IMR-90 (cell line): ENCODE measurements at regions of chr15 and their contacts with region 1.

Region 1: DNA sequence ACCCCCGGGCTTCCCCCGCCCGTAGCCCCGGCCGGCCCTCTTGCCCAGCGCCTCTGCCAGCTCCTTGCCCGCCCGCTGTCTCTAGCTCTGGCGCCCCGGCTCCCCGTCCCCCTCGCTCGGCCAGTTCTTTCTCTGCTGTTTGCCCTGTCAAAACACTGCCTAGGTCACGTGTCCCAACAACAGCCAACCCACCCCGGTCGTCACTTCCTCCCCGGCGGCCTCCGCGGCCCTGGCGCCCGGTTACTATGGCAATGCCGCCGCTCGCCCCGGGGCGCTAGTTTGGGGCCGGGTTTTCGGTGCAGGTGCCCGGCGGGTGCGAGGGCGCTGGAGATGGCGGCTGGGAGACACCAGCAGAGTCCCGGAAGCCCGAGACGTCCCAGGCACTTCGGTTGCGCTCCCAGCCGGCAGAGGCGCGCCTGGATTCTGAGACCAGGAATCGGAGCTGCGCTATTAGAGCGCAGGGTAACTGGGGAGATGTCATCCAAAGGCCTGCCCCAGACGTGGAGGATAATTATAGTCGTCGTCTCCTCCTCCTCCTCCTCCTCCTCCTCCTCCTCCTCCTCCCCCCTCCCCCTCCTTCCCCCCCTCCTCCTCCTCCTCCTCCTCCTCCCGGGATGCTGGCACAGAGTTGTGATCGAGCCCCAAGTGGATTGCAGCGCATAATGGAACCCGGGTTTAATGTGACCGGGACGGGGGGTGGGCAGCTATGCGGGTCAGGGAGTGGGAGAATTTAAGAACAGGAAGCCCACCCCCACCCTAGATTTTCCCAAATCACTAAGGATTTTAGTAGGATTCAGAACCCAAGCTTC is at the start of gene ATOSA:
- DNase-seq: peak; percentile 84
- ATAC-seq: peak; percentile 84
- H3K4me3 ChIP-seq: peak within 1 kb of the TSS; percentile 94
- H3K27ac ChIP-seq: peak within 1 kb of the TSS; percentile 69
- H3K4me1 ChIP-seq: no peaks in the 10 kb centered on the region
- H3K27me3 ChIP-seq: peaks cover 2% of the 10 kb centered on the region
- CTCF ChIP-seq: 0 out of 2 replicates have a peak, but pooled peaks have one; percentile 7
- POLR2A ChIP-seq: no peak
- RAD21 ChIP-seq: no peak
- total RNA-seq, gene ATOSA: 17.2 and 23.9 TPM in 2 replicates

Region 2: DNA sequence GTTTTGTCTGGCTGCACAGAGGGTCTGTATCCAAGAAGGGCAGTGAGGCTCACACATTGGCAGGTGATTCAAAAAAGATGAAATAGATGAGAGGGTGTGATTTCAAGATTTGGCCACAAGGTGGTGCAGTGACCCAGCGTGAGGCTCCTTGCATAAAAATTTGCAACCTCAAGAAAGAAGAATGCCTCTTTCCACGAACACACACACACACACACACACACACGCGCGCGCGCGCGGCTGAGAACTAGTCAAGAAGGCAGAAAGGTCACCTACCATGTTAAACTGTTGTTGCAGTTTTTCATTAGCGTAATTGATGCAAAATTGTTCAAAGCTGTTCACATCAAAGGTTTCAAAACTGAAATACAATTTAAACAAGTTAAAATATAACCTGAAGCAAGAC is 423.1 kb before region 1 on chr15:
- CTCF ChIA-PET with region 1: no interaction called
- POLR2A ChIA-PET with region 1: no interaction called
- dilution Hi-C with region 1: no loop called
- in situ Hi-C with region 1: no loop called
- intact Hi-C with region 1: loop called (anchors 10 kb)
- DNase-seq: peak; percentile 80
- ATAC-seq: peak; percentile 64
- H3K4me3 ChIP-seq: no peak overlapping the region; the same call in 1 of the 2 replicates
- H3K27ac ChIP-seq: no peak overlapping the region
- H3K4me1 ChIP-seq: peaks cover 10% of the 10 kb centered on the region
- H3K27me3 ChIP-seq: no peaks in the 10 kb centered on the region
- CTCF ChIP-seq: peak; percentile 82
- POLR2A ChIP-seq: no peak
- RAD21 ChIP-seq: peak; percentile 91

Region 3: GRCh38 chr15:52528991-52529926 is 150.2 kb before region 1 on chr15:
- CTCF ChIA-PET with region 1: no interaction called
- POLR2A ChIA-PET with region 1: no interaction called
- dilution Hi-C with region 1: no loop called
- in situ Hi-C with region 1: no loop called
- intact Hi-C with region 1: loop called (anchors 5 kb)
- DNase-seq: peak; percentile 71
- ATAC-seq: peak; percentile 87
- H3K4me3 ChIP-seq: peak overlapping the region; percentile 75
- H3K27ac ChIP-seq: peak overlapping the region; percentile 25
- H3K4me1 ChIP-seq: 0 out of 2 replicates have a peak, but pooled peaks cover 3% of the 10 kb centered on the region
- H3K27me3 ChIP-seq: peaks cover 8% of the 10 kb centered on the region
- CTCF ChIP-seq: 0 out of 2 replicates have a peak, but pooled peaks have one; percentile 15
- POLR2A ChIP-seq: no peak
- RAD21 ChIP-seq: peak; percentile 40

Region 4: DNA sequence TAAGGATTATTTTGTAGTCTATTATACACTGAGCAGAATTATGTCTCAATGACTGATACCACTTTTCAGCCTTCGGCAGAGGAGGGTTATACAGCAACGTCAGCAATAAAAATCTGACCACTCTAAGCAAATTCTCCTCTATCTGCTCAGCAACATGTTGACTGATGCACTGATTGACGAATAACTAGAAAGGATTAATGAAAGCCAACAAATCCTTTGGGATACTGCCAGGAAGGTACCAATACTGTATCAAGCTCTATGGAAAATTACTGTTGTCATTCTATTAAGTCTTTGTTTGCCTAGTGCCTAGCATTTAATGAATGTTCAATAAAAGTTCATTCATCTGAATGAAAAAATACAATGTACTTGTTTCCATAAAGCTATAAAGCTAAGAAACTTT is 115.8 kb before region 1 on chr15:
- CTCF ChIA-PET with region 1: no interaction called
- POLR2A ChIA-PET with region 1: no interaction called
- dilution Hi-C with region 1: no loop called
- in situ Hi-C with region 1: no loop called
- intact Hi-C with region 1: loop called (anchors 2 kb)
- DNase-seq: no peak
- ATAC-seq: no peak
- H3K4me3 ChIP-seq: no peak overlapping the region
- H3K27ac ChIP-seq: no peak overlapping the region
- H3K4me1 ChIP-seq: peaks cover 17% of the 10 kb centered on the region
- H3K27me3 ChIP-seq: no peaks in the 10 kb centered on the region
- CTCF ChIP-seq: no peak
- POLR2A ChIP-seq: no peak
- RAD21 ChIP-seq: no peak

Region 5: GRCh38 chr15:52609593-52609992 is 69.8 kb before region 1 on chr15:
- CTCF ChIA-PET with region 1: no interaction called
- POLR2A ChIA-PET with region 1: no interaction called
- dilution Hi-C with region 1: no loop called
- in situ Hi-C with region 1: no loop called
- intact Hi-C with region 1: loop called (anchors 10 kb)
- DNase-seq: no peak
- ATAC-seq: no peak
- H3K4me3 ChIP-seq: no peak overlapping the region
- H3K27ac ChIP-seq: no peak overlapping the region
- H3K4me1 ChIP-seq: no peaks in the 10 kb centered on the region
- H3K27me3 ChIP-seq: no peaks in the 10 kb centered on the region
- CTCF ChIP-seq: no peak
- POLR2A ChIP-seq: no peak
- RAD21 ChIP-seq: no peak

Region 6: GRCh38 chr15:52975941-52976450 is 296.6 kb after region 1 on chr15:
- CTCF ChIA-PET with region 1: no interaction called
- POLR2A ChIA-PET with region 1: no interaction called
- dilution Hi-C with region 1: no loop called
- in situ Hi-C with region 1: no loop called
- intact Hi-C with region 1: no loop called
- DNase-seq: no peak
- ATAC-seq: no peak
- H3K4me3 ChIP-seq: no peak overlapping the region
- H3K27ac ChIP-seq: no peak overlapping the region
- H3K4me1 ChIP-seq: no peaks in the 10 kb centered on the region
- H3K27me3 ChIP-seq: no peaks in the 10 kb centered on the region
- CTCF ChIP-seq: no peak
- POLR2A ChIP-seq: no peak
- RAD21 ChIP-seq: no peak